CD4-positive, alpha-beta memory T cell (primary cell): ENCODE measurements at regions of chr3 and their contacts with region 1.

Region 1: GRCh38 chr3:32460031-32460749 is 42.5 kb downstream of the CMTM6 start:
- DNase-seq: peak; percentile 90 to 96 (median 95)
- H3K4me3 ChIP-seq: peak overlapping the region; percentile 25 to 47
- H3K4me3 Mint-ChIP-seq: peak overlapping the region in 5 of 8 donors; percentile 80 to 89 (median 85)
- H3K27ac ChIP-seq: peak overlapping the region; percentile 88
- H3K27ac Mint-ChIP-seq: no peak overlapping the region
- H3K4me1 ChIP-seq: peaks cover 84% of the 10 kb centered on the region
- H3K4me1 Mint-ChIP-seq: peaks cover 34 to 39% (median 37%) of the 10 kb centered on the region in 4 donors
- H3K27me3 ChIP-seq: no peaks in the 10 kb centered on the region
- H3K27me3 Mint-ChIP-seq: no peaks in the 10 kb centered on the region

Region 2: GRCh38 chr3:32374788-32375595 is 85.2 kb before region 1 on chr3:
- CTCF ChIA-PET with region 1: interaction called, 19 read pairs
- POLR2A ChIA-PET with region 1: interaction called, 9 read pairs
- intact Hi-C with region 1: no loop called
- DNase-seq: peak; percentile 74 to 78 (median 78)
- H3K4me3 ChIP-seq: no peak overlapping the region
- H3K4me3 Mint-ChIP-seq: peak overlapping the region in 1 of 8 donors; percentile 21
- H3K27ac ChIP-seq: no peak overlapping the region
- H3K27ac Mint-ChIP-seq: peak overlapping the region in 5 of 7 donors; percentile 18 to 70 (median 33)
- H3K4me1 ChIP-seq: peaks cover 21% of the 10 kb centered on the region
- H3K4me1 Mint-ChIP-seq: peaks cover 18 to 28% (median 24%) of the 10 kb centered on the region in 4 donors
- H3K27me3 ChIP-seq: no peaks in the 10 kb centered on the region
- H3K27me3 Mint-ChIP-seq: no peaks in the 10 kb centered on the region

Region 3: DNA sequence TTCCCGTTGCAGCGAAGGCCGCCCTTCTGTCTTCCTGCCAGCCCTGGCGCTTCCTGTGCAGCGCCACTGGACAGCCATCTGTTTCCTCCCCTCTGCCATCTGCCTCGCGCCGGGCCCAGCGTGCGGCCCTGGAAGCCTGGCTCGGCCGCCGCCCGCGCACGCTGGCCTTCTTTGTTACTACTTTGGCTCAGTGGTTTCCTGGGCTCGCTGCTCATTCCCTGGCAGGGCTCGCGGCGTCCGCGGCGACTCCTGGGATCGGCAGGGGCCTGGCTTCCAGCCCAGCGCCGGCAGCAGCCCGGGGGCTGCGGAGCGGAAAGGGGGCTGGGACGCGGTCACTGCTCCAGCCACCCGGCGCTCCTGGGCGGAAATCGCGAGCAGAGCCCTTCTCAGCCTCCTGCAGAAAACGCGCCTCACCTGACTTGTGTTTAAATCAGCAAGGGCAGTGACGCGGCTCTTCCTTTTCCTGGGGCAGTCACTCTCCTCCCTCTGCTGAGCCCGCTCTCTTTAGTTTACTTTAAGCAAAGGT is 58.6 kb before region 1 on chr3:
- CTCF ChIA-PET with region 1: interaction called, 208 read pairs
- POLR2A ChIA-PET with region 1: interaction called, 14 read pairs
- intact Hi-C with region 1: loop called (anchors 2 kb)
- DNase-seq: peak; percentile 60 to 75 (median 67)
- H3K4me3 ChIP-seq: peak overlapping the region; percentile 61 to 68
- H3K4me3 Mint-ChIP-seq: peak overlapping the region; percentile 87 to 95 (median 94)
- H3K27ac ChIP-seq: peak overlapping the region; percentile 84
- H3K27ac Mint-ChIP-seq: peak overlapping the region; percentile 95 to 100 (median 99)
- H3K4me1 ChIP-seq: peaks cover 72% of the 10 kb centered on the region
- H3K4me1 Mint-ChIP-seq: peaks cover 53 to 84% (median 69%) of the 10 kb centered on the region in 4 donors
- H3K27me3 ChIP-seq: no peaks in the 10 kb centered on the region
- H3K27me3 Mint-ChIP-seq: no peaks in the 10 kb centered on the region

Region 4: DNA sequence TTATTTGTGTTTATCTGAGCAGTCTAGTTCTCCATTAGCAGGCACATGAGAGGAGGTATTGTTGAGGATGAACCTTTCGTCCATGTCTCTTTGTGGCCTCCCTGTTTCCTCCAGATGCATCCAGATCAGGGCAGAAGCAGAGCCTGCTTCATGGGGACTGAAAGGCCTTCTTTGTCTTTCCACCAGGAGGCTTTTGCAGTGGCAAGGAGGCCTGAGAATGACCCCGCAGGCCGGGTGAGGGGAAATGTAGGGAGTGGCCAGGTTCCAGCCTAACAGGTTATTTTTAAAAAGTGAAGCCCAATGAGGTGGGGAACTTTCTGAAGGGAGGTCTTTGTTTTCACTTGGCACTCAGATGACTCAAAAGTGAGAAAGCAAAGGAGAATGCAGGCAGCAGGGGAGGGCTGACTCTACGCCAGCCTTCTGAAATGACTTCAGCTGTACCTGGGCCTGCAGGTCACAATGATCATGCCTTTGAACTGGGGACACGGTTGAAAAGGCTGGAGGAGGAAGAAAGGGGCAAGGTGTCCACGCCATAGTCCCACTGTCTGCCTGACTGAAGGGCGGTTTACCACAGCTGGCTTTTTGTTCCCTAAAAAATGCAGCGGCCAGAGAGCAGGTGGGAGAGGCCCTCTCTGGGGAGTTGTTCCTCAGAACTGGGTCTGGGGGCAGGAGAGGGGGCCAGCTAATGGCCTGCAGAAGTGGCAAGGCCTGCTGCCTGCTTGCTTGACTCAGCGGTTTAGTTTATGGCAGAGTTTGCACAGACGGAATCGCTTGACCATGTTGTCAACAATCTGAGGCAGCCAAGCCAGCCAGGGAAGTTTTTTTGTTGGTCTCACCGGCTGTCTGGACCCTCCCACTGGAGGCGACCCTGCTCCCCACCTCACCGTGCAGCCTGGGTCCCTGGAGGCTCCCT is 39.8 kb before region 1 on chr3:
- CTCF ChIA-PET with region 1: interaction called, 15 read pairs
- POLR2A ChIA-PET with region 1: interaction called, 415 read pairs
- intact Hi-C with region 1: no loop called
- DNase-seq: no peak
- H3K4me3 ChIP-seq: no peak overlapping the region
- H3K4me3 Mint-ChIP-seq: peak overlapping the region in 7 of 8 donors; percentile 31 to 76 (median 70)
- H3K27ac ChIP-seq: peak overlapping the region; percentile 18
- H3K27ac Mint-ChIP-seq: peak overlapping the region; percentile 3 to 96 (median 92)
- H3K4me1 ChIP-seq: peaks cover 94% of the 10 kb centered on the region
- H3K4me1 Mint-ChIP-seq: peaks cover 66 to 100% (median 89%) of the 10 kb centered on the region in 4 donors
- H3K27me3 ChIP-seq: no peaks in the 10 kb centered on the region
- H3K27me3 Mint-ChIP-seq: no peaks in the 10 kb centered on the region

Region 5: DNA sequence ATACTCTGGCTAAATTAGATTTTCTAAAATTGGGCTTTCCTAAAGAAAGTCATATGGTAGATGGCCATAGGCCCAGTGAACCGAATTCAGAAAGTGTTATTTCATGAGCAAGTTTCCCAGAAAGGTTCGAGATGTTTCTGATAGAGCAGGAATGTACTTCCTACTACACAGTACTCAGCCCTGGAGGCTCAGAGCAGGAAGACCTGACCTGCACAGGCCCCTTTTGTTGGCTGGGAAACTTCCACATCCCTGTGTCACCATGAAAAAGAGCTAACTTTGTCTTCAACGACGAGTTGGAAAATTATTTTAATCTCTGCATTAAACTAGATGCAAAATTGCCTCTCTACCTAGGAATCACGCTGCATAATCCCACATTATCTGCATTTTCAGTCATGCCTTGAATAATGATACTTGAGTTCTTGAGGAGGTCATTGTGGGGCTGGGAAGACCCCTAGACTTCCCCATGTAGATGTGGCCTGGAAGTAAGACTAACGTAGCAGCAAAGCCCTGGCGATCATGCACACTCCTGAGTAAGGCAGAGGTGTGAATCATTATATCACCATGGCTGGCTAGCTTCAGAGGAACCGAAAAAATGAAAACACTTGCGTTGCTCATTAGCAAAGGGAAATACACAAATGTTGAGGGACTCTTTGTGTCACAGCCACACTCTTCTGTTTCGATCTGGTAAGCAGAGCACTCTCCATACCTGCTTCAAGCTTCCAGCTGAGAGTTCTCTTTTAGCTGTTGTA is 21.4 kb before region 1 on chr3:
- CTCF ChIA-PET with region 1: interaction called, 7 read pairs
- POLR2A ChIA-PET with region 1: interaction called, 415 read pairs
- intact Hi-C with region 1: loop called (anchors 1 kb)
- DNase-seq: peak in 1 of 5 donors; percentile 16
- H3K4me3 ChIP-seq: peak overlapping the region in 1 of 2 donors; percentile 34
- H3K4me3 Mint-ChIP-seq: peak overlapping the region; percentile 8 to 86 (median 70)
- H3K27ac ChIP-seq: peak overlapping the region; percentile 17
- H3K27ac Mint-ChIP-seq: peak overlapping the region; percentile 68 to 94 (median 85)
- H3K4me1 ChIP-seq: peaks cover 79% of the 10 kb centered on the region
- H3K4me1 Mint-ChIP-seq: peaks cover 53 to 91% (median 64%) of the 10 kb centered on the region in 4 donors
- H3K27me3 ChIP-seq: no peaks in the 10 kb centered on the region
- H3K27me3 Mint-ChIP-seq: no peaks in the 10 kb centered on the region

Region 6: DNA sequence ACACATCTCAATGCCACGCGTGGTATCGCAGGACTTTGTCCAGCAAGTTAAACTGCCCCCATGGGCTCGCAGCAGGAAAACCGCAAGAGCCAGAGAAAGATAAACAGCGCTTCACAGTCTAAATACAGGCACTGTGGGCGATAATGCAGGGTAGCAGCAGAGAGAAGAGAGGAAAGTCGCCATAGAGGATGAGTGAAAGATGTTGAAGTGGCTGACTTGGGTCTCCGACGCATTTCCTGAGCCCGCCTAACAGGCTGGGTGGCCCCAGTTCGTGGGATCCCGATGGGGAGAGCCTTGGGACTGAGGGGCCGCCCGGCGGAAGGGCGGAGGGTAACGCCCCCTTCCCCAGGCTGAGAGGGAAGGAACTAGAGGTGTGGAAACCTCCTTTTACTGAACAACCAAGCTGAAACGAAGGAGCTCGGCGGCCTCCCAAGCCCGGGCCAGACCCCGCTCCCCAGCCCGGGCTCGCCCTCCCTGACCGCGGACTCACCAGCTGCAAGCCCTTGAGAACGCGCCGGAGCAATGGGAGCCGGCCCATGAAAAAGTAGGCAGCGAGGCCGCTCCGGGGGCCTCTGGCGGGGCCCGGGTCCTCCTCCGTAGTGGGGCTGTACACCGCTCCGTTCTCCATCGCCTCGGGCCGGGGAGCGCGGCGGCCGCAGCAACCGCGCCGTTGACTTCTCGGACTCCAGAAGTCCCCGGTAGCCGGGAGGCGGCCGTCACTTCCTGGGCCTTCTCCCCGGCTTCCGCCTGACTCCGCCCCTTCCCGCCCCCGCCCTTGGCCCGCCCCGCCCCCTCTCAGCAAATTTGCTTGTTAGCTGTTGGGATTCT is 42.1 kb after region 1 on chr3 and contains the start of gene CMTM6:
- CTCF ChIA-PET with region 1: no interaction called
- POLR2A ChIA-PET with region 1: interaction called, 8 read pairs
- intact Hi-C with region 1: loop called (anchors 5 kb)
- DNase-seq: peak; percentile 69 to 80 (median 74)
- H3K4me3 ChIP-seq: peak within 1 kb of the TSS; percentile 82 to 89
- H3K4me3 Mint-ChIP-seq: peak within 1 kb of the TSS; percentile 91 to 99 (median 96)
- H3K27ac ChIP-seq: peak within 1 kb of the TSS; percentile 98
- H3K27ac Mint-ChIP-seq: peak within 1 kb of the TSS; percentile 77 to 99 (median 98)
- H3K4me1 ChIP-seq: peaks cover 46% of the 10 kb centered on the region
- H3K4me1 Mint-ChIP-seq: peaks cover 24 to 51% (median 36%) of the 10 kb centered on the region in 4 donors
- H3K27me3 ChIP-seq: no peaks in the 10 kb centered on the region
- H3K27me3 Mint-ChIP-seq: no peaks in the 10 kb centered on the region
- total RNA-seq, gene CMTM6: 30.3 to 34.8 TPM